Upper lobe of right lung (tissue), 1 donor: ENCODE measurements at regions of chr22 and their contacts with region 1.

Region 1: GRCh38 chr22:24325105-24325757 is 54.6 kb downstream of the SPECC1L start:
- DNase-seq: no peak
- ATAC-seq: peak; percentile 90
- H3K4me3 ChIP-seq: no peak overlapping the region
- H3K27ac ChIP-seq: no peak overlapping the region
- H3K4me1 ChIP-seq: peaks cover 11% of the 10 kb centered on the region
- H3K27me3 ChIP-seq: no peaks in the 10 kb centered on the region
- CTCF ChIP-seq: peak; percentile 71

Region 2: GRCh38 chr22:24236656-24237055 is 88.6 kb before region 1 on chr22:
- intact Hi-C with region 1: no loop called
- DNase-seq: no peak
- ATAC-seq: no peak
- H3K4me3 ChIP-seq: no peak overlapping the region
- H3K27ac ChIP-seq: no peak overlapping the region
- H3K4me1 ChIP-seq: peaks cover 4% of the 10 kb centered on the region
- H3K27me3 ChIP-seq: no peaks in the 10 kb centered on the region
- CTCF ChIP-seq: no peak

Region 3: DNA sequence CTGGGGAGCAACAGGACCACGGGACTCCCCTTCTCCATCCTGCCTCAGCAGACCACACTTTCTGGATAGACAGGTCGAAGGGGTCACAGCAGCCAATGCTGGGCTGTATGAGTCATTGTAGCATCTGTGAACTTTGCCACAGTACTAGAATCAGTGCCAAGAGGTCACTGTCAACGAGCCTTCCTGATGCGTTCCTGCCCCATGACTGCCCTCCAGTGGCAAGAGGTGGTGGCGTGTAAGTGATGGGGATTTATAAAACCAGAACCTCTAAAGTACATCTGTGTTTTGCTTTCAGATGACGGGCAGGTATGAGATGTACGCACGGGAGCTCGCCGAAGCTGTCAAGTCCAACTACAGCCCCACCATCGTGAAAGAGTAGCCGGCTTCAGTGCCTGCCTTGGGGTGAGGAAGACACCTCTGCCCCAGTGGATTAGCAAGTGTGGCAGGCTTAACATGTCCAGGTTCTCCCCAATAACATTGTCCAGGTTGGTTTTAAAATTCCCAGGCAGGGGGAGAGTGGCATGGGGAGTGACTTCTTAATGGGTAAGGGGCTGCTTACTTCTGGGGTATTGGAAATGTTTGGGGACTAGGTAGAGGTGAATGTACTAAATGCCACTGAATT is 200.3 kb after region 1 on chr22:
- intact Hi-C with region 1: loop called (anchors 10 kb)
- DNase-seq: peak; percentile 85
- ATAC-seq: peak; percentile 89
- H3K4me3 ChIP-seq: no peak overlapping the region
- H3K27ac ChIP-seq: no peak overlapping the region
- H3K4me1 ChIP-seq: peaks cover 7% of the 10 kb centered on the region
- H3K27me3 ChIP-seq: no peaks in the 10 kb centered on the region
- CTCF ChIP-seq: peak; percentile 86